ENCODE measurements at regions of chr2 and their contacts with region 1.

Region 1: DNA sequence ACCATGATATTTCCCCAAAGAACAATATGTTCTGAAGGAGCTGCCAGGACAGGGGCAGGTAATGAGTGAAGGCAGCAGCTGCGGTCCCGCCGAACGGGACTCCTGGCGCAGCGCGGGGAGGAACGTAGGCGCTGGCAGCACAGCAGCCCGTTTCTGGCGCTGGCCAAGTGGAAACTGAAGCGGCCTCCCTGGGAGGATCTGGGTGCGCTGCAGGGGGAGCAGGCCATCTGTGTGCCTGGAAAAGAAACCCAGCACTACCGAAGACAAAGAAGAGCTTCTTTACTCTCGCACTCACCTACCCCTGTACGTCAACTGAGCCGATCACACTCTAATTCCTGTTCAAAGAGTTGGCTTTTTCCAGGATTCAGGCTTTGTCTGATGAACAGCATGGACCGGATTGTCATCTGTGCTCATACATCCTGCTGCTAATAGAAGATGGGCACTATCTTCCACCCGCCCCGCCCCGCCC is 11.8 kb downstream of the G6PC2 start:
- DNase-seq: no peak
- CTCF ChIP-seq: no peak

Region 2: DNA sequence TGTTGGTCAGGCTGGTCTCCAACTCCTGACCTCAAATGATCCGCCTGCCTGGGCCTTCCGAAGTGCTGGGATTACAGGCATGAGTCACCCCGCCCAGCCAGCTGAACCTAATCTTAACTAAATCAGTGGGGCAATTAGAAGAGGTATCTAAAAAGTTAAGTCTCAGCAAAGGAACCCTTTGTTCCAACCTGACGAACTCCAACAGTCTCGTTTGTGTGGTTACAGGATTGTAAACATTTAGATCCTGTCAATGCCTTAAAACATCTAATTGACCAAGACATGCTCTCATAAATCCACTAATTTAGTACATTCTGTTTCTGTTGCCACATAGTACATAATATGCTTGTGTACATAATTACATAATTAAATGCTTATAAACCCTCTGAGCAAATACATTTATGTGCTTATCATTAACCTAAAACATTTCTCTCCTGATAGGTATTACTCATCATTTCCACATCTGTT is 634.5 kb before region 1 on chr2:
- in situ Hi-C with region 1: no loop called
- DNase-seq: no peak
- CTCF ChIP-seq: no peak

Region 3: DNA sequence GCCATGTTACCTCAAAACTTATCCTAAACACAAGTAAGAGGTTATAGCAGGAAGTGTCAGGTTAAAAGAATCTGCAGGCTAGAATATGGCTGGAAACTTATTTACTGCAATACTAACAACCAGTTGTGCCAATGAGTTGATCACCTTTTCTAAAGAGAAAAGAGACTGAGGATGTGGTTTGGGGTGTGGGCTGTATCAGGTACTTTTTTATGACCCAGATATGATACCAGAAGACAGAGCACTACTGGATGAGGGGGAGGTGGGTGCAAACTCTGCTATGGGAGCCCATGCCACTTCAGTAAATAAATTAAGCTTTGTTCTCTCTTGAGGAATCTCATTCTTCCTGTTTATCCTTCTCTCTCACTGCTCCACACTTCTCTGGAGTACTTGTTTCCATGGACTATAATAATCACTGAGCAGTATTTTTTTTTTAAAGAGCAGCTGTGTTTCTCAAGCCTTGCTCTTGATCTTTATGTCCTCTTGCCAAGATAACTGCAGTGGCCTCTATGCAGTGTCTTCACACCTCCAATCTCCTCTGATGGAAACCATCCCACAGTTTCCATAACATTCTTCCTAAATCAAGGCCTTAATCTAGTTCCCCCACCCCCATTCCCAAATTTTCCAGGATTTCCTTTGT is 161.7 kb before region 1 on chr2:
- in situ Hi-C with region 1: no loop called
- DNase-seq: peak; percentile 24
- CTCF ChIP-seq: no peak

Region 4: DNA sequence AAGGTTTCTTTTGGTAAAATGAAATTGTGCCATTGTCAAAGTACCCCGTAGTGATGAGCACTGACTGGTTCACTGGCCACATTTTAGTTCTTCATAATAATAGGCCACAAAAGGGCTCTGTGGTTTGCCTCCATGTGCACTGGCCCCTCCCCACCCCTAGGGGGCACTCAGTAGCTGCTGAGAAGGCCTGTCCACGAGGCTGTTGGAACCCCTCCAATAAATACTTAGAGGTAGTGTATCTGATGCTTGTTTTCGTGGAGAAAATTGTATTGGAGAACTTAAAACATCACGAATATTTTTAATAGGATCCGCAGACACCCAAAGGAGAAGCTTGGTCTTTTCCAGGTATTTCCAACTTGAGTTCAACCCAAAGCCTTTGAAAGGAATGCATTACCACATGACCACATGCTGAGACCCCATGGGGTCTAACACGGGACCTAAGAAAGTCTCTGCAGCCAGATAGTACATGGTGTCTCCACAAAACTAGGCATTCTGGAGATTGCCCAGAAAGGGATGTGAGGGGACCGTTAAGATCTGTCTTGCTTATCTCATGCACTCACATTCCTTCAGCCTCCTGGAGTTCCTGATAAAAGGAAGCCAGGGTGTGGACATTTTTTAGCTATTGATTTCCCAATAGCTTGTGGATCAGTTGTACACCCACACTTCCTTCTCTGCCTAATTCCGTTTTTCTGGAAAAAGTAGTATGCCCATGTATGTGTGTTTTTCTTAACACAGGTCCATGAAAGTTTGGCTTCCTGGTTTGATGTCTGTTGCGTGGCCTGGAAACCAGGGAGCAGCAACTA is 139.0 kb before region 1 on chr2:
- in situ Hi-C with region 1: loop called (anchors 10 kb)
- DNase-seq: peak; percentile 31
- CTCF ChIP-seq: peak; percentile 53

Region 5: GRCh38 chr2:168804214-168804613 is 108.7 kb before region 1 on chr2:
- in situ Hi-C with region 1: no loop called
- DNase-seq: no peak
- CTCF ChIP-seq: no peak

Measured in GM13976 (cell line).